Panc1 (cell line): ENCODE measurements at regions of chr6 and their contacts with region 1.

Region 1: GRCh38 chr6:151765444-151765886 is 42.0 kb upstream of the ESR1 start:
- DNase-seq: peak; percentile 39
- ATAC-seq: 0 out of 2 replicates have a peak, but pooled peaks have one; percentile 59
- H3K4me3 ChIP-seq: no peak overlapping the region
- H3K27ac ChIP-seq: no peak overlapping the region
- H3K4me1 ChIP-seq: no peaks in the 10 kb centered on the region; the same call in 1 of the 2 replicates
- H3K27me3 ChIP-seq: no peaks in the 10 kb centered on the region
- CTCF ChIP-seq: peak; percentile 73; the same call in 1 of the 2 replicates

Region 2: GRCh38 chr6:151900730-151901433 is 135.4 kb after region 1 on chr6:
- CTCF ChIA-PET with region 1: no interaction called
- POLR2A ChIA-PET with region 1: no interaction called
- in situ Hi-C with region 1: no loop called
- intact Hi-C with region 1: no loop called
- DNase-seq: no peak
- ATAC-seq: no peak
- H3K4me3 ChIP-seq: no peak overlapping the region
- H3K27ac ChIP-seq: no peak overlapping the region
- H3K4me1 ChIP-seq: no peaks in the 10 kb centered on the region
- H3K27me3 ChIP-seq: no peaks in the 10 kb centered on the region
- CTCF ChIP-seq: no peak

Region 3: DNA sequence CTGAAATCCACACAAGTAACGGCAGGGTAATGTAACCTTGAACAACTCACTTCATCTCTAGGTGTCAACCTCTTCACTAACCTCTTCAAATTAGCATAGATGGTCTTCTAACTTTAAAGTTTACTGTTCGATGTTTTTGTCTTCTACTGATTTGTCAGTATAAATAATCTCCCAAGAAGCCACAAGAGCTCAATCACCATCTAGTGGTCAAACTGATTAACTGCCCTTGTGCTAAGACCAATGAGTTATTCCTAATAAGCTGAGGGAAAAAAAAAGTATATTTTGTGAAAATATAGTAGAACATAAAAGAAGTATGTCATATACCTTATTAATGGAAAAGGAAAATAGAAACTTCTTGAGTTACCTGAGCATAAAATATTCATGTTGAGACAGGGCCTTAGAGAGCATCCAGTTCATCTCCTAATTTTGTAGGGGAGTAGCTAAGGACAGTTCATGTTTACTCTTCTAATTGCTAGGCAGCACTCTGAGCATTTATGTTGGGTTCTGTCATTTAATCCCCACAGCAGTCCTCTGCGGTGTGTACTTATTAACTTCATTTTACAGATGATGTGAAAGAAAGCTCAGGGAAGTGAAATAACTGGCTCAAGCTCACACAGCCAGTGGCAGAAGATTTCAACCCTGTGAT is 359.1 kb after region 1 on chr6:
- CTCF ChIA-PET with region 1: interaction called, 3 read pairs
- POLR2A ChIA-PET with region 1: no interaction called
- in situ Hi-C with region 1: no loop called
- intact Hi-C with region 1: loop called (anchors 2 kb)
- DNase-seq: peak; percentile 17
- ATAC-seq: peak; percentile 78; the same call in 1 of the 2 replicates
- H3K4me3 ChIP-seq: no peak overlapping the region
- H3K27ac ChIP-seq: no peak overlapping the region
- H3K4me1 ChIP-seq: no peaks in the 10 kb centered on the region
- H3K27me3 ChIP-seq: no peaks in the 10 kb centered on the region
- CTCF ChIP-seq: peak; percentile 81; the same call in 1 of the 2 replicates

Region 4: GRCh38 chr6:152267967-152268845 is 502.7 kb after region 1 on chr6:
- CTCF ChIA-PET with region 1: interaction called, 4 read pairs
- POLR2A ChIA-PET with region 1: no interaction called
- in situ Hi-C with region 1: no loop called
- intact Hi-C with region 1: loop called (anchors 2 kb)
- DNase-seq: peak; percentile 4
- ATAC-seq: no peak
- H3K4me3 ChIP-seq: no peak overlapping the region
- H3K27ac ChIP-seq: no peak overlapping the region
- H3K4me1 ChIP-seq: no peaks in the 10 kb centered on the region
- H3K27me3 ChIP-seq: no peaks in the 10 kb centered on the region; the same call in 1 of the 2 replicates
- CTCF ChIP-seq: peak; percentile 66